ENCODE measurements at regions of chr2 and their contacts with region 1.

Region 1: DNA sequence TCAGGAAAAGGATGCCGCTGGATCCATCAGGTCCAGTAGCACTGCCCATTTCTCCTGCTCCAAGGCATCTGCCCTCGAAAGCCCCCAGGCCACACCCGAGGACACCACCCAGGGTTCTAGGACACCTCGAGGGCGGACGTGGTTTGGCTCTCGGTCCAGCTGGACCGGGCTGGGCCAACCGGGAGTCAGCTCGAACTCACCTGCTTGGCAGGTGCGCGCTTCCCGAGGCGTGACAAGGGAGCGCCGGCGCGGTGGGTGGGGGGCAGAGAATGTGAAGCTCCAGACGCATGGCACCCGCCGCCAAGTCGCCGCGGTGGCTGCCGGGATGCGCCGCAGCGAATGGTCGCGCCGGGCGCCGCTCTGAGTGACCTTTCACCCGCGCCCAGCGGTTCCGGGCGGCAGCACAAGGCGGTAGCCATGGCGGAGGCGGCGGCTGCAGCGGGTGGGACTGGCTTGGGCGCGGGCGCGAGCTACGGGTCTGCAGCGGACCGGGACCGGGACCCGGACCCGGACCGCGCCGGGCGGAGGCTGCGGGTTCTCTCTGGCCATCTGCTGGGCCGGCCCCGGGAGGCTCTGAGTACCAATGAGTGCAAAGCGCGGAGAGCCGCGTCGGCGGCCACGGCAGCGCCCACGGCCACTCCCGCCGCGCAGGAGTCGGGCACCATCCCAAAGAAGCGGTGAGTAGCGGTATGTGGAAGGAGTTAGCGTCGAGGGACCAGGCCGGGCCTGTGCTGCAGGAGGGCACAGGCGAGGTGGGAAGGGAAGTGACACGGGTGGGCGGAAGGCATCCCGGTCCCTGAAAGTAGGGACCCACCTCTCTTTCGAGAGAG is at the start of gene AGPS:
- DNase-seq: peak; percentile 86
- ATAC-seq: peak; percentile 96
- H3K4me3 Mint-ChIP-seq: peak within 1 kb of the TSS; percentile 88
- H3K27ac Mint-ChIP-seq: peak within 1 kb of the TSS; percentile 93
- H3K4me1 Mint-ChIP-seq: peaks cover 52% of the 10 kb centered on the region
- H3K27me3 Mint-ChIP-seq: no peaks in the 10 kb centered on the region
- total RNA-seq, gene AGPS: 65.9 to 67.9 TPM

Region 2: DNA sequence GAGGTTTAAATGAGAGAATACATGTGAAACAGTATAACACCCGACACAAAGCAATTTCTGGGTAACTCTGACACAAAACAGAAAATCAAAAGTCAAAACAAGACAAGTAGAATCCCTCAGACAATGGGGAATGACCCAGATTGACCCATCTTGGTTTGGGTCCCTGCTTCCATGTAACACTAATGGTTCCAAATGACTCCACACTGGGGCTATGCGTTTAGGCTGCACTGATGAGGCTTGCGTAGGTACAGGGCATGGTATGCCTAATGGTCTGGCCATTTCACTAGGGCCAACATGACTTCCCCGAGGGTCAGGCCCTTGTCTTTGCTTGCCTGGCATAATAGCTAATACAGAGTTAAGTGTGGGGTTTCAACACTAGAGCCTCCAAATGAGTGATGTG is 100.9 kb before region 1 on chr2:
- CTCF ChIA-PET with region 1: no interaction called
- POLR2A ChIA-PET with region 1: no interaction called
- DNase-seq: no peak
- ATAC-seq: no peak
- H3K4me3 Mint-ChIP-seq: no peak overlapping the region
- H3K27ac Mint-ChIP-seq: peak overlapping the region; percentile 10
- H3K4me1 Mint-ChIP-seq: peaks cover 69% of the 10 kb centered on the region
- H3K27me3 Mint-ChIP-seq: no peaks in the 10 kb centered on the region

Region 3: GRCh38 chr2:177380181-177380580 is 12.4 kb before region 1 on chr2:
- CTCF ChIA-PET with region 1: interaction called, 3 read pairs
- POLR2A ChIA-PET with region 1: interaction called, 10 read pairs
- DNase-seq: no peak
- ATAC-seq: no peak
- H3K4me3 Mint-ChIP-seq: no peak overlapping the region
- H3K27ac Mint-ChIP-seq: no peak overlapping the region
- H3K4me1 Mint-ChIP-seq: no peaks in the 10 kb centered on the region
- H3K27me3 Mint-ChIP-seq: no peaks in the 10 kb centered on the region

Region 4: GRCh38 chr2:177413703-177414102 is 21.1 kb after region 1 on chr2:
- CTCF ChIA-PET with region 1: interaction called, 42 read pairs
- POLR2A ChIA-PET with region 1: interaction called, 3 read pairs
- DNase-seq: no peak
- ATAC-seq: no peak
- H3K4me3 Mint-ChIP-seq: no peak overlapping the region
- H3K27ac Mint-ChIP-seq: no peak overlapping the region
- H3K4me1 Mint-ChIP-seq: peaks cover 6% of the 10 kb centered on the region
- H3K27me3 Mint-ChIP-seq: no peaks in the 10 kb centered on the region

Measured in activated CD8-positive, alpha-beta T cell treated with anti-CD3 and anti-CD28 coated beads, Interleukin-2, amount 10 ng/mL, durations not matched to agents 7 days and 5 days (primary cell).